Common myeloid progenitor, CD34-positive (primary cell): ENCODE measurements at regions of chr4 and their contacts with region 1.

Region 1: DNA sequence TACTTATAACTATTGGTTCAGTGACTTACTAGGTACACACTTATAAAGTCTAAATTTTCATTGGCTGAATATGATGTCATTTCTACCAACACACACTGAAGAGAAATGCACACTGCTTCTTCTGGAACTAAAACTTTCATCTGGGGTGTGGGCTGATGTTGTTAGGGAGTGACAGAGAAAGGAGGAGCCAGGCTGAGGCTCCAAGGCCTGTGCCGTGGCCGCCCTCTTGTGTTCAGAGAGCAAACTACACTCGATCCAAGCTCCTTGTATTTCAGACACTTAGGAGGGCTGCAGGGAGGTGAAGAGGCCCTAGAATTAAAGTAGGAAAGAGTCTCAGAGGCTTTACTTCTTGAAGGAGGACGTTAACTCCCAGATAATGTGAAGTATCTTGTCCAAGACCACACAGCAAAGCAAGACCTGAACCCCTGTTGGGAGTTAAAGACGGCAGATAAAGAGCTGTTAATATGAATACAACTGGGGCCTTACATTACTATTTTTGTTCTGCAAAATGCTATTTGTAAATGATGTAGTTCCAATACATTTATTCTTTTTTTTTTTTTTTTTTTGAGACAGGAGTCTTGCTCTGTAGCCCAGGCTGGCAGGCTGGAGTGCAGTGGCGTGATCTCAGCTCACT is 137.5 kb downstream of the AFAP1 start:
- DNase-seq: peak; percentile 74 to 86 (median 81)
- H3K4me3 ChIP-seq: no peak overlapping the region
- H3K27ac ChIP-seq: no peak overlapping the region
- H3K4me1 ChIP-seq: no peaks in the 10 kb centered on the region
- H3K27me3 ChIP-seq: peaks cover 0 to 46% (median 14%) of the 10 kb centered on the region in 5 experiments

Region 2: GRCh38 chr4:7630568-7631287 is 171.5 kb before region 1 on chr4:
- CTCF ChIA-PET with region 1: no interaction called
- POLR2A ChIA-PET with region 1: no interaction called
- DNase-seq: no peak
- H3K4me3 ChIP-seq: no peak overlapping the region
- H3K27ac ChIP-seq: no peak overlapping the region
- H3K4me1 ChIP-seq: peaks cover 0 to 5% (median 0%) of the 10 kb centered on the region in 4 experiments
- H3K27me3 ChIP-seq: peaks cover 0 to 61% (median 11%) of the 10 kb centered on the region in 5 experiments

Region 3: GRCh38 chr4:7761720-7762119 is 40.5 kb before region 1 on chr4:
- CTCF ChIA-PET with region 1: interaction called, 70 read pairs
- POLR2A ChIA-PET with region 1: no interaction called
- DNase-seq: peak; percentile 53 to 70 (median 64)
- H3K4me3 ChIP-seq: no peak overlapping the region
- H3K27ac ChIP-seq: no peak overlapping the region
- H3K4me1 ChIP-seq: no peaks in the 10 kb centered on the region
- H3K27me3 ChIP-seq: peaks cover 0 to 59% (median 10%) of the 10 kb centered on the region in 5 experiments

Region 4: GRCh38 chr4:7779432-7779768 is 22.8 kb before region 1 on chr4:
- CTCF ChIA-PET with region 1: interaction called, 17 read pairs
- POLR2A ChIA-PET with region 1: no interaction called
- DNase-seq: no peak
- H3K4me3 ChIP-seq: no peak overlapping the region
- H3K27ac ChIP-seq: no peak overlapping the region
- H3K4me1 ChIP-seq: peaks cover 0 to 18% (median 11%) of the 10 kb centered on the region in 4 experiments
- H3K27me3 ChIP-seq: peaks cover 0 to 8% (median 3%) of the 10 kb centered on the region in 5 experiments

Region 5: GRCh38 chr4:7827991-7828720 is 25.9 kb after region 1 on chr4:
- CTCF ChIA-PET with region 1: interaction called, 25 read pairs
- POLR2A ChIA-PET with region 1: no interaction called
- DNase-seq: peak; percentile 76 to 94 (median 92)
- H3K4me3 ChIP-seq: peak overlapping the region in 2 of 7 experiments; percentile 21 to 31
- H3K27ac ChIP-seq: peak overlapping the region in 1 of 2 experiments; percentile 35
- H3K4me1 ChIP-seq: peaks cover 6 to 26% (median 14%) of the 10 kb centered on the region in 4 experiments
- H3K27me3 ChIP-seq: peaks cover 0 to 25% (median 5%) of the 10 kb centered on the region in 5 experiments

Region 6: DNA sequence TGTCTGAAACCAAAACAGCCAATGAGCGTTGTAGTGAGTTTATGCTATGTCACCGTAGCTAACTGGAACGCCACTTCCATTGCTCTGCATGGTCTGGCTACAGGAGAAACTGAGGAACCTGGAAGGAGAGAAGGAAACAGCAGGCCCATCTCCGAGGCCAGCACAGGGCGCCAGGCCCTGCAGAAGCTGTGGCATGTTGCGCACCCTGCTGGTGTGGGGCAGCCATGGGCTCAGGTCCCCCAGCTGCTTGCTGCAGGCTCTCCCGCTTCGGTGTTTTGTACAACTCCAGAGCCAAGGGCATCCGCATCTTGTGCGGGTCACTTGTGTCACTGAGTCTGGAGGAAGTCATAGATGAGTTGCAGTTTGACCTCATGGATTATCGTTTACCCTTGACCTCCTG is 48.3 kb after region 1 on chr4:
- CTCF ChIA-PET with region 1: interaction called, 157 read pairs
- POLR2A ChIA-PET with region 1: no interaction called
- DNase-seq: peak in 1 of 3 donors; percentile 9
- H3K4me3 ChIP-seq: no peak overlapping the region
- H3K27ac ChIP-seq: no peak overlapping the region
- H3K4me1 ChIP-seq: no peaks in the 10 kb centered on the region
- H3K27me3 ChIP-seq: peaks cover 0 to 53% (median 9%) of the 10 kb centered on the region in 5 experiments